Breast epithelium (tissue), 4 donors: ENCODE measurements at regions of chr1 and their contacts with region 1.

Region 1: GRCh38 chr1:56710646-56711045 is 65.5 kb downstream of the PRKAA2 start:
- DNase-seq: no peak
- H3K4me3 ChIP-seq: no peak overlapping the region
- H3K27ac ChIP-seq: no peak overlapping the region
- H3K4me1 ChIP-seq: no peaks in the 10 kb centered on the region
- H3K27me3 ChIP-seq: no peaks in the 10 kb centered on the region
- CTCF ChIP-seq: no peak
- POLR2A ChIP-seq: no peak

Region 2: GRCh38 chr1:55064071-55064581 is 1646.5 kb before region 1 on chr1:
- intact Hi-C with region 1: loop called (anchors 5 kb)
- DNase-seq: no peak
- H3K4me3 ChIP-seq: no peak overlapping the region
- H3K27ac ChIP-seq: peak overlapping the region in 1 of 2 donors; percentile 58
- H3K4me1 ChIP-seq: peaks cover 0 to 17% of the 10 kb centered on the region in 2 donors
- H3K27me3 ChIP-seq: no peaks in the 10 kb centered on the region
- CTCF ChIP-seq: no peak
- POLR2A ChIP-seq: no peak

Region 3: DNA sequence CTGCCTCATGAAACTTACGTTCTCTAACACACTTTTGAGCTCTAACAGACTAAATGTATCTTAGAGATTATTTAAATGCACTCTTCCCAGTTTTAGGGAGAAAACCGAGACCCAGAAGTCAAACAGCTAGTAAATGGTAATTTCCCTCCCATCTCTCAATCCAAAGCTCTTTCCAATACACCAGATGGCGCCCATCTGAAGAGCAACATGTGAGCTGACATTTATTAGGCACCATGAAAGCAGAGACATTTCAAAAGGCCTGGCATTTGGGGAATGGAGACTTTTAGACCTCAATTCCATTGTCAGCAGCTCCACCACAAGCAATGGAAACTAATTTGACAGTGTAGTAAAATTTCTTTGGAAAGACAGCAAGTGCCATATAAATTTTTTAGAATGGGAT is 521.9 kb after region 1 on chr1:
- intact Hi-C with region 1: no loop called
- DNase-seq: no peak
- H3K4me3 ChIP-seq: no peak overlapping the region
- H3K27ac ChIP-seq: no peak overlapping the region
- H3K4me1 ChIP-seq: no peaks in the 10 kb centered on the region
- H3K27me3 ChIP-seq: no peaks in the 10 kb centered on the region
- CTCF ChIP-seq: no peak
- POLR2A ChIP-seq: no peak